Heart right ventricle (tissue), 16 donors: ENCODE measurements at regions of chr6 and their contacts with region 1.

Region 1: DNA sequence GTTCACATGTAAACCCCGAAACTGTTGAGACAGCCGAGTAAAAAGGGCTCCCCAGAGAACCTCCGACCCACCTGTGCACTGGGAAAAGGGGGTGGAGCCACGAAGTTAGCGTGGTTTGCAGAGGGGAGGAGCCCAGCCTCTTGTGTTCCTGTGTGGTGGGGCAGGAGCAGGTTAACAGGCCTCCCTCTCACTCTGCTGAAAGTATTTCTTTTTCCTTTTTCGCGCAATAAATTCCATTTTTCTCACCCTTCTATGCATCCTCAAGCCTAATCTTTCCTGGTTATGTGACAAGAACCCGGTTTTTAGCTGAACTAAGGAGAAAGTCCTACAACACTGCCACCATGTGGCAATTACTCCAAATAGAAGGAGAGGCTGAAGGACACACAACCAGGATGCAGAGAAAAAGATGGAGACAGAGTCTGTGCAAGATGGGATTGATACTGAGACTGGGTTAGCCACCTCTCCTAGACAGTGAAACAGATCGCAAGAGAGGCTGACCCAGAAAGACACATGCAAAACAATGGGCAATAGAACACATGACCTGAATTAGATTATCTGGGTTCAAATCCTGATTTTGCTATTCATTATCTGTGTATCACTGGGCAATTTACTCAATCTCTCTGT is 168.7 kb upstream of the PRSS16 start:
- DNase-seq: peak in 1 of 2 donors; percentile 25
- ATAC-seq: peak in 6 of 8 donors; percentile 28 to 76 (median 50)
- H3K4me3 ChIP-seq: peak overlapping the region in 2 of 10 donors; percentile 9 to 16
- H3K27ac ChIP-seq: no peak overlapping the region
- H3K4me1 ChIP-seq: peaks cover 0 to 5% (median 4%) of the 10 kb centered on the region in 9 donors
- H3K27me3 ChIP-seq: peaks cover 0 to 97% (median 51%) of the 10 kb centered on the region in 7 donors
- CTCF ChIP-seq: peak in 8 of 9 donors; percentile 23 to 72 (median 67)

Region 2: DNA sequence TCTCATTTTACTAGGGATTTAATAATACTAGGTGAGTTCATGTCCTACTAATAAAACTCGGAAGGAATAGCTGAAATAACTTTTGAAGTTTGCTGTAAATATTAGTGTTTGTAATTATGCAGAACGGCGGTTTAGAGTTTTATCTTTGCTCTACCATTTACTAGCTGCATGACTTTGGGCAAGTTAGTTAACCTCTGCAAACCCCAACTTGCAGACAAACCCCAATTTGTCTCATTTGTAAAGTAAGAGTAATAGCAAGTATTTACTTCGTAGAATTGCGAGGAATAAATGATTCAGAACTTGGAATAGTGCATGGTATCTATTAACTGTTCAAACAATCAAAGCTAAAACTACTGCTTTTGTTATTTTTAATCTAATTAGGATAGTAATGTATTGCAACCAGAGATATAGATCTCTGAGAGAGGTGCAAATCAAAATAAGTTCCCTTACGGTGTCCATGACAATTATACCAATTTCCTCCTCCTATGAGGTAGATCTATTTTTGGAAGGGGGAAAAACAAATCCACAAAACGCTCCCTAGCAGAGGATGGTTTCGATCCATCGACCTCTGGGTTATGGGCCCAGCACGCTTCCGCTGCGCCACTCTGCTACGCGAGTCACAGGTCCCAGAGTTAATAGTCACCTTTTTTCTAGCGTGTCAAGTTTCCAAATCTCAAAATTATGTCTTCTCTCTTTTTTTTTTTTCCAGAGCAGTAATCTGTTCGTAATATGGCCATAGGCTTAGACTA is 748.9 kb before region 1 on chr6:
- intact Hi-C with region 1: loop called in 1 of 10 experiments (anchors 10 kb)
- DNase-seq: no peak
- ATAC-seq: peak in 1 of 8 donors; percentile 50
- H3K4me3 ChIP-seq: no peak overlapping the region
- H3K27ac ChIP-seq: no peak overlapping the region
- H3K4me1 ChIP-seq: peaks cover 0 to 44% (median 0%) of the 10 kb centered on the region in 9 donors
- H3K27me3 ChIP-seq: peaks cover 10 to 93% (median 88%) of the 10 kb centered on the region in 7 donors
- CTCF ChIP-seq: no peak

Region 3: DNA sequence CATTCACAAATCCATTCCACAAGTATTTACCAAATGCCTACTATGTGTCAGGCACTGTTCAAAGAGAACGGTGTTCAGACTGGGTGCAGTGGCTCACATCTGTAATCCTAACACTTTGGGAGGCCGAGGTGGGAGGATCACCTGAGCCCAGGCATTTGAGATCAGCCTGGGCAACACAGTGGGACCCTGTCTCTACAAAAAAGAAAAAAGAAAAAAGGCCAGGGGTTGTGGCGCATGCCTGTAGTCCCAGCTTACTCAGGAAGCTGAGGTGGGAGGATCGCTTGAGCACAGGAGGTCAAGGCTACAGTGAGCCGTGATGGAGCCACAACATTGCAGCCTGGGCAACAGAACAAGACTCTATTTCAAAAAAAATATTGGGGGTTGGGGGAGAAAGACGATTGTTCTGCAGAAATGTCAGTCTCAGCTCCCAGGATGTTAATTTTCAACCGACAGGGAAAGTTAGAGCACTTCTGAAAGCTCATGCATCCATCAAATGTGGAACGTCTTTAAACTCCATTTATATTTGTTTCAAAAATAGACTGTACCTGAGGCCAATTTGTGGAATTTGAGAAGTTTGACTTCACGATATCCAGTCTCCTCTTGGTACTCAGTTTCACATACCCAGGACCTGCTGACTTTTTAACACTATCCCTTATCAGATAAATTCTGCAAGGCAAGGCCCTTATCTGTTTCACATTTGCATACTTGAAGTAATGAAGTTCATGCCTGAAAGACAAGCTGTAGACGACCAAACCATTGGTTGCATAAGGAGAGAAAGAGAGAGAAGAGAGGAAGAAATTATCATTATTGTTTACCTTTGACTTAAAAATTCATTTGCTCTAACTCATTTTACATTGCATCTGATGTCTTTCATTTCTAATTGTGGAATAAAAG is 728.6 kb before region 1 on chr6:
- intact Hi-C with region 1: loop called in 2 of 10 experiments (anchors 5 to 10 kb)
- DNase-seq: no peak
- ATAC-seq: no peak
- H3K4me3 ChIP-seq: no peak overlapping the region
- H3K27ac ChIP-seq: no peak overlapping the region
- H3K4me1 ChIP-seq: peaks cover 0 to 10% (median 0%) of the 10 kb centered on the region in 9 donors
- H3K27me3 ChIP-seq: peaks cover 0 to 16% (median under 1%) of the 10 kb centered on the region in 7 donors
- CTCF ChIP-seq: no peak

Region 4: GRCh38 chr6:26607434-26608230 is 471.2 kb before region 1 on chr6:
- intact Hi-C with region 1: loop called (anchors 2 to 5 kb)
- DNase-seq: peak in 1 of 2 donors; percentile 28
- ATAC-seq: peak in 4 of 8 donors; percentile 57 to 76 (median 70)
- H3K4me3 ChIP-seq: peak overlapping the region in 5 of 10 donors; percentile 4 to 29 (median 23)
- H3K27ac ChIP-seq: no peak overlapping the region
- H3K4me1 ChIP-seq: peaks cover 0 to 4% (median 0%) of the 10 kb centered on the region in 9 donors
- H3K27me3 ChIP-seq: peaks cover 0 to 20% (median 5%) of the 10 kb centered on the region in 7 donors
- CTCF ChIP-seq: peak; percentile 10 to 77 (median 60)

Region 5: GRCh38 chr6:27066802-27067201 is 12.0 kb before region 1 on chr6:
- intact Hi-C with region 1: no loop called
- DNase-seq: no peak
- ATAC-seq: no peak
- H3K4me3 ChIP-seq: no peak overlapping the region
- H3K27ac ChIP-seq: no peak overlapping the region
- H3K4me1 ChIP-seq: no peaks in the 10 kb centered on the region
- H3K27me3 ChIP-seq: peaks cover 0 to 51% (median 17%) of the 10 kb centered on the region in 7 donors
- CTCF ChIP-seq: no peak

Region 6: DNA sequence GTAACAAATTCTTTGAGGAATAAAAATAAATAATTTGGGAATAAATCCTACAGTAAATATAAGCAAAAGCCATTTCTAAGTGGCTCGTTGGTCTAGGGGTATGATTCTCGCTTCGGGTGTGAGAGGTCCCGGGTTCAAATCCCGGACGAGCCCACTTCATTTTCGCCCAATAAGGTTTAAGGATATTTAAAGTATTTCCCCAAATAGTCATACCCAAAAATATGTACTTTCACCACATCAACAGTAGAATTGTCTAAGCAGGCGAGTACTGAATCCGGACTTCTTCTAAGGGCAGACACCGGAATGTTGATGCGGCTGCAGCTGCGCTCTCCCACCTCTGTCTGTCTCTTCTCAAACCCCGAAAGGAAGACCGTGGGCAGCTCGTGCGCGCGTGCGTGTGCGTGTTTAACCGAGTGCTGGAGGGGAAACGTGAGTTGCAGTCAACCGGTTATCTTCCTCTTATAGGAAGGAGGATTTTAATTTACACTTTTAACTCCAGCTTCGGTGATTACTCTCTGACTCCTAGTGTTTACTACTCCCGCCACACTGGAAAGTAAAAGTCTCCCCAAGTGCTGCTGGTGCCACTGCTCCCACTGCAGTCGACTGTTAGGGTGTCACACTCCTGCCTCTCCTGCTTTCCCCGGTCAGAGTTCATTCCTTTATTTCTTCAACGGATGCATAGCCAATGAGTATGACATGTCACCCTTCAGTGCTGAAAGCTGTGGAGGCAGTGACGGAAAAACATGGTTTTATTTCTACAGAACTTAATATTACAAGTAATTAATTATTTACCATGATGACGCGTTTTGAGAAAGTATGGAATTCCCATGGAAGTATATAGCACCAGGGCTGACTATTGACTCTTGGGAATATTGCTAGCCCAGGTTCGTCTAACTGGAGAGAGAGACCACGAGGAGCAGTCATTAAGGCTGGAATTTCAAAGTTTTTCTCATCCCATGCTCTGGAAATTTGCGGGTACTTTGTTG is 13.1 kb after region 1 on chr6:
- intact Hi-C with region 1: loop called in 1 of 10 experiments (anchors 1 kb)
- DNase-seq: no peak
- ATAC-seq: peak in 1 of 8 donors; percentile 55
- H3K4me3 ChIP-seq: peak overlapping the region in 6 of 10 donors; percentile 2 to 30 (median 28)
- H3K27ac ChIP-seq: no peak overlapping the region
- H3K4me1 ChIP-seq: peaks cover 0 to 16% (median 0%) of the 10 kb centered on the region in 9 donors
- H3K27me3 ChIP-seq: peaks cover 4 to 94% (median 86%) of the 10 kb centered on the region in 7 donors
- CTCF ChIP-seq: no peak

Region 7: DNA sequence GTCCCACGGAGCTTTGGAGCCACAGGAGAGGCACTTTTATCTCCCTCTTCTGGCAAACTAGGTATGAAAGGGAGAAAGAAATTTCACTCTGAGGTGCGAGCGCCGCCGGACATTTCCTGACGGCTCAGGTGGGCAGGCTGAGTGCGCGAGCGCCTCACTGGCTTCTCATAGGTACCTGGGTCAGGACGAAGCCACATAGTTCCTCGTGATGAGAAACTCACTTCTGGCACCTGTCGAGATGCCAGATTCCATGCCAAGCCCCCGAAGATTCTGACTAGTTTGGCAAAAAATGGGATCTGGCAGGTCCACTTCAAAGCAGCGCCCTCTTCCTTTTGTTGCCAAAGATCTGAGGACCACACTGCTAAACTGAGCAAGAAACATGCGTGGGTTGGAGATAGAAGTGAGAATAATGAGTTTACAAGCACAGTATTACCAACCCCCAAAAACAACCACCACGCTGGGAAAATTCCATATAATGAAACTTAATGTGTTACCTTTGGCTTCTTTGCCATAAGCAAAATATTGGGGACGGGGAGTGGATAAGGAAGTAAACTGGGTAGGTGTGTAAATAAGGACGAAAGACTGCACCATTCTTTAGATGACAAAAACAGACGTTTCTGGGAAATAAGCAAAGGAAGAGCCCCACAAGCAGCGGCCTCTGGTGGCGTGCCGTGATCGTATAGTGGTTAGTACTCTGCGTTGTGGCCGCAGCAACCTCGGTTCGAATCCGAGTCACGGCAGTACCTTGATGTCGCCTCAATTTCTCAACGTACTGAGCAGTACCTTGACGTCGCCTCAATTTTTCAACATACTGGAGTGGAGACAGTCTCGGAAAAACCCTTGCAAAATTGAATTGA is 78.8 kb after region 1 on chr6:
- intact Hi-C with region 1: no loop called
- DNase-seq: peak; percentile 62 to 65
- ATAC-seq: peak in 7 of 8 donors; percentile 64 to 92 (median 80)
- H3K4me3 ChIP-seq: peak overlapping the region; percentile 5 to 54 (median 44)
- H3K27ac ChIP-seq: peak overlapping the region in 1 of 10 donors; percentile 11
- H3K4me1 ChIP-seq: peaks cover 0 to 17% (median 9%) of the 10 kb centered on the region in 9 donors
- H3K27me3 ChIP-seq: peaks cover 0 to 18% (median 0%) of the 10 kb centered on the region in 7 donors
- CTCF ChIP-seq: peak in 8 of 9 donors; percentile 7 to 75 (median 60)